AG04450 (cell line): ENCODE measurements at regions of chr10 and their contacts with region 1.

Region 1: GRCh38 chr10:97714048-97714371 is 480 bp downstream of the MARVELD1 start:
- DNase-seq: no peak
- H3K4me3 ChIP-seq: peak overlapping the region; percentile 94
- H3K27ac ChIP-seq: peak overlapping the region; percentile 75
- H3K27me3 ChIP-seq: no peaks in the 10 kb centered on the region
- CTCF ChIP-seq: peak; percentile 20; the same call in 1 of the 2 replicates

Region 2: DNA sequence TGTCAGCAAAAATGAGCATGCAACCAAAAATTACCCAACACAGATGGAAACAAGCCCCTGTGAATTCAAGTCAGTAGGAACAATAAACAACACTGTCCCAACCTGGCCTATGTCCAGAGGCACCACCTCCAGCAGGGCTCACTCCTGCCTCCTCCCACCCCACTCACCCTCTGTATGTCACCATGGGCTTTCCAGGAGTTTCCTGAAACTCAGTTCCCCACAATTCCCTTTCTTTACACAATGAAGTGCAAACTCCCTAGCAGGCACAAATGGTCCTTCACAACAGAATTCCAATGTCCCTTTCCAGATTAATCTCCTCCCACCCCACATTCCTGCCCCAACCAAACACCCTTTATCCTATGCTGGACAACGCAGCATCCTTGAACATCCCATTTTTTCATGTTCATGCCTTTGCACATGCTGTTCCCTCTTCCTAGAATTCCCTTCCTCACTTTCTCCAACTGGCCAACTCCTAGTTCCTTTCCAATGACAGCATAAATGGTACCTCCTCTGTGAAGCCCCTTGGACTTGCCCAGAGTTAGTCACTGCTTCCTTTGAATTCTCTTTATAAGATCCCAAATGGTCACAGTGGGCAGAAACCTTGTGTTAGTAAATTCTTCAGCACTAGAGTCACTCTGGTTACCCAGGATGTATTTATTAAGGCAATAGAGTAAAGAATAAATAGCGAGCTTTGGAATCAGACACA is 685.7 kb before region 1 on chr10:
- CTCF ChIA-PET with region 1: no interaction called
- POLR2A ChIA-PET with region 1: no interaction called
- DNase-seq: no peak
- H3K4me3 ChIP-seq: no peak overlapping the region
- H3K27ac ChIP-seq: no peak overlapping the region
- H3K27me3 ChIP-seq: peaks cover 4% of the 10 kb centered on the region
- CTCF ChIP-seq: no peak

Region 3: GRCh38 chr10:97701438-97702069 is 12.5 kb before region 1 on chr10:
- CTCF ChIA-PET with region 1: interaction called, 40 read pairs
- POLR2A ChIA-PET with region 1: interaction called, 11 read pairs
- DNase-seq: peak; percentile 61
- H3K4me3 ChIP-seq: no peak overlapping the region
- H3K27ac ChIP-seq: no peak overlapping the region
- H3K27me3 ChIP-seq: no peaks in the 10 kb centered on the region
- CTCF ChIP-seq: peak; percentile 94

Region 4: GRCh38 chr10:97724341-97724941 is 10.4 kb after region 1 on chr10:
- CTCF ChIA-PET with region 1: interaction called, 316 read pairs
- POLR2A ChIA-PET with region 1: interaction called, 21 read pairs
- DNase-seq: no peak
- H3K4me3 ChIP-seq: no peak overlapping the region
- H3K27ac ChIP-seq: peak overlapping the region; percentile 31
- H3K27me3 ChIP-seq: no peaks in the 10 kb centered on the region
- CTCF ChIP-seq: no peak

Region 5: DNA sequence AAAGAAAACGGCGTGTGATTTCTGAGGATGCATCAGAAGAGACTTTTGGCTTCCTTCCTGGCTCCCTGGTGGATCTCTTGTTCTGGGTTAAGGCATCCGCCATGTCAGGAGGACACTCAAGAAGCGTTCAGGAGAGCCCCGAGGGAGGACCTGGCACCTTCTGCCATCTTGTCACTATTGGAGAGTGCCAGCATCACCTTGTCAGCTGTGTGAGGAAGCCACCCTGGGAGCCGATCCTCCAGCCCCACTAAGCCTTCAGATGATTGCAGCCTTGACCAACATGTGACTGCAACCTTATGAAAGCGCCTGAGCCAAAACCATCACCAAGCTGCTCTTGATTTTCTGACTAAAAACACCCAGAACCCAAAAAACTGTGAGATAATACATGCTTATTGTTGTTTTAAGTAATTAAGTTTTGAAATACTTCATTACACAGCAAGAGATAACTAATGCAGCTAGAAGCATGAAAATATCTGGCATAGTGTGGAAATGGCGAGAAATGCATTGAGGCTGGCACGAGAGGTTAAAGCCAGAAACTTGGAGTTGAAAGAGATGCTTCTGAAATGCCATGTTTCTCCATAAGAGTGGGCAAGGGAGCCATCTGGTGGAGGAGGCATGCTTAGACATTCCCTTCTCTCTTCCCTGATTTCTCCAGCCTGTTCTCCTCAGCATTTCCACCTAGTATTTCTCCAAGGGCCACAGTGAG is 17.5 kb after region 1 on chr10:
- CTCF ChIA-PET with region 1: interaction called, 316 read pairs
- POLR2A ChIA-PET with region 1: interaction called, 16 read pairs
- DNase-seq: peak; percentile 61
- H3K4me3 ChIP-seq: no peak overlapping the region
- H3K27ac ChIP-seq: no peak overlapping the region
- H3K27me3 ChIP-seq: no peaks in the 10 kb centered on the region
- CTCF ChIP-seq: peak; percentile 91

Region 6: GRCh38 chr10:97736902-97737769 is 23.1 kb after region 1 on chr10 and contains the start of gene ZFYVE27:
- CTCF ChIA-PET with region 1: interaction called, 316 read pairs
- POLR2A ChIA-PET with region 1: interaction called, 16 read pairs
- DNase-seq: peak; percentile 91
- H3K4me3 ChIP-seq: peak within 1 kb of the TSS; percentile 98
- H3K27ac ChIP-seq: peak within 1 kb of the TSS; percentile 91
- H3K27me3 ChIP-seq: no peaks in the 10 kb centered on the region
- CTCF ChIP-seq: no peak
- polyA plus RNA-seq, gene ZFYVE27: 11.1 and 13.5 TPM in 2 replicates